Posterior cingulate gyrus (tissue), 11 donors: ENCODE measurements at regions of chr17 and their contacts with region 1.

Region 1: GRCh38 chr17:39980351-39981206 is at the start of gene PSMD3:
- DNase-seq: peak; percentile 96 to 100 (median 98)

Region 2: DNA sequence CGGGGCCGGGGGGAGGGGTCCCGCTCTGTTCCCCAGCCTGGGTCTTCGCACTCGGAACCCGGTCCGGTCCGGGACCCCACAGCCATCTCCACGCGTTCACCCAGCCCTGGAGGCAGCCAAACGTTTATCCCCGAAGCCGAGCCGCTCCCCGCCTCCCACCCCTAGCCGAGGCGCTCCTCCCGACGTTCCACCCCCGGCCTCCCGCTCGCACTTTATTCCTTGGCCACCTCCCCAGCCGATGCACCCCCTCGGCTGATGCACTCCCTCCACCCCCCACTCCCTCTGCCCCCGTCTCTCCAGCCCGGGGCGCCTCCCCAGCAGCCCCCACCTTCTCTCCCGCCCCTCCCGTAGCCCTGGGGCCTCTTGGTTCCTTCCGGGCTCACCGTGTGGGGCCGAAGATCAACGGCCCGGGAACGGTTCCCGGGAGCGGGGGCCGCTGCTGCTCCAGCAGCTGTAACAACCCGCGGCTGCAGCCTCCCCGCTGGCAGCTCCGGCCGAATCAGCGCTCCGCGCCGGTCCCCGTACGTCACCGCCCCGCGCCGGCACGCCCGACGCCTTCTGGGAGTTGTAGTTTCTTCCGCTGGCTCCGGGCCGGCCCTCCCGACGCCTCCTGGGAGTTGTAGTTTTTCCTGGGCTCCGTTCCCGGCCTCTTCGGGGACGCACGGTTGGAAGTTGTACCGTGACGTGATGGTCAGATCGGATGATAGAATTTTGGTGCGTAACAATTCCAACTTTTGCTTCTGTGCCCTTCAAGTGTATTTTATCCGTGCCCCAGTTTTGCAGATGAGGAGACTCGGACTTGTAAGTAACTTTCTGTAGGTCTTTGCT is 53.3 kb before region 1 on chr17 and contains the starts of genes LRRC3C and ORMDL3:
- intact Hi-C with region 1: loop called (anchors 2 kb)
- DNase-seq: peak; percentile 87 to 99 (median 92)

Region 3: DNA sequence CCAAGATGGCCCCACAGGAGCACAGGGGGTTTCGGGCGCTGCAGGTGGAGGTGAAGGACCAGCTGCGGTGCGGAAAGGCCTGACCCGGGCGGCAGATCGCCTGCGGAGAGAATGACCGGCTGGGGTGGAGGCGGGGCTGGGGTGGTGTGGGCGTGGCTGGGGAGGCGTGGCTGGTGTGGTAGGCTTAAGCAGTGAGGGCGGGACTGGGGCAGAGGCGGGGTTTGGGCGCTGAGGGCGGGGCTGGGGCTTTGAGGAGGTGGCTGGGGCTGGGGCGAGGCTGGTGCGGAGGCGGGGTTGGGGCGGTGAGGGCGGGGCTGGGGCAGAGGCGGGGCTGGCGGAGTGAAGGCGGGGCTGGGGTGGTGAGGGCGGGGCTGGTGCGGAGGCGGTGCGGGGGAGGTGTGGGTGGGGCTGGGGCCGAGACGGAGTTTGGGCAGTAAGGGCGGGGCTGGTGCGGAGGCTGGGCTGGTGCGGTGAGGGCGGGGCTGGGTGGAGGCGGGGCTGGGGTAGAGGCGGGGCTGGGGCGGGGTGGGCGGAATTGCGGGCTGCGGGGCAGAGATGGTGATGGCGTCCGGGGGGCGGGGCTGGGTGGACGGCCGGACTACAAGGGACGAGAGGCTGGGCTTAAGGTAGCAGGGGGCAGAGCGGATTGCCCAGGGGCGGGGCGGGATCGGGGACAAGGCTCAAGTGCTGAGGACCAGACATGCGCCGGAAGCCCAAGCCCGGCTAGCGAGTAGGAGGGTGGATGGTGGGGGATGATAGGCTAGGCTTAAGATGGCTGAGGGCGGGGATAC is 27.7 kb before region 1 on chr17:
- intact Hi-C with region 1: loop called (anchors 1 kb)
- DNase-seq: peak; percentile 82 to 99 (median 93)

Region 4: DNA sequence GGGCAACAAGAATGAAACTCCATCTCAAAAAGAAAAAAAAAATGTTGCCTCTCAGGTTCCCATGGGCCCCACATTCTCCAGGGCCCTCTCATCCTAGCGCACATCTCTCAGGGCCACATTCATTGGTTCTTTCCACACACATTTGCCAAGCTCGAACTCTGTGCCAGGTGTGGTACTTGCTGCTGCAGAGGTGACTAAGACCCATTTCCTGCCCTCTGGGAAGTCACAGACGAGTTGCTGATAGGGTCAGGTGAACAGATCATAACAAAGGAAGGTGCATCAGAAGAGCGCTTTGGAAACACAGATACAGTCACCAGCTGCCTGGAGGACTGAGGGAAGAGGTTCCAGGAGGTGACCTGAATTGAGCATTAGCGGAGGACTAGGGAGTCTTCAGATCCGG is 16.8 kb before region 1 on chr17:
- intact Hi-C with region 1: loop called (anchors 1 kb)
- DNase-seq: peak in 1 of 10 donors; percentile 22

Region 5: GRCh38 chr17:40086150-40087044 is 105.8 kb after region 1 on chr17:
- intact Hi-C with region 1: no loop called
- DNase-seq: peak in 1 of 10 donors; percentile 56